GM18951 (cell line): ENCODE measurements at regions of chr12 and their contacts with region 1.

Region 1: DNA sequence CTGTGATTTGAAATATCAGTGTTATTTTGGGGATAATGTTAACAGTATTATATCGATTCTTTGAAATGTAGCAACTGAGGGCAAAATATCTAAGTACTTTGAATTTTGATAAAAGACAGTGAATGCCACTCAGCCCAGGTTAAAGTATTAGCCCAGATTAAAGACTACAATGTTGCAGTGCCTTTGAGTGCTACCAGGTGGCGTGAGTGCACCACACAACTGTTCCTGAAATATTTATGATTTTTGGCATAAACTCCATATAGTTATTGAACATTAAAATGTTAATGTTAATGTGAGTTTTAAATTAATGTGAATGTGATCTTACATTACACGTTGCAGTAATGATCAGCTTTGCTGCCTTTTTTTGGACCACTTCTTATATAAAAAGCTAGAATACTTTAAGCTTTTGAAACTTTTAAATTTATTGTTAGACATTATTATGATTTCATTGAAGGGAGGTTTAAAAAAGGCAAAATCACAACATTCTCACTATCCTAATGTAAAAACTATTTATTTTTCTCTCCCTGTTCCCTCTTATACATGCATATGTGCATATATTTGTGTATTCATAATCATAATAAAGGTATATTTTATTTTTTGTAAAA is 22.5 kb downstream of the MRPS35 start:
- POLR2A ChIP-seq: no peak

Region 2: DNA sequence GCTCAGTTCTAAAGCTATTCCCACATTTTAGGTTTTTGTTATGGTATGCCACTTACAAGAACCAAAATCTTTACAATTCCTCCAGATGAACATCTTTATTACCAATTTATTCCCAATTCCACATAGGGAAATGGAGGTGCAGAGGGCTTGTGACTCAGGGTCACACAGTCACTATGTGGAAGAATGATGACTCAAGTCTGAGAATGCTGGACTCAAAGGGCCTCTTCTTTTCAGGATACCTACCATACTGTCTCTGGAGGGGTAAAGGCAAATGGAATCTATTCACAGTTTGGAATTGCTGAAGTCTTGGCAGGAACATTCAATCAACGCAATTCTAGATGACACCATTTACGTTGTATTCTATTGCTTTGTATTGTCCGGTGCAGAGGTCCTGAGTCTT is 95.0 kb after region 1 on chr12:
- in situ Hi-C with region 1: no loop called
- POLR2A ChIP-seq: no peak

Region 3: DNA sequence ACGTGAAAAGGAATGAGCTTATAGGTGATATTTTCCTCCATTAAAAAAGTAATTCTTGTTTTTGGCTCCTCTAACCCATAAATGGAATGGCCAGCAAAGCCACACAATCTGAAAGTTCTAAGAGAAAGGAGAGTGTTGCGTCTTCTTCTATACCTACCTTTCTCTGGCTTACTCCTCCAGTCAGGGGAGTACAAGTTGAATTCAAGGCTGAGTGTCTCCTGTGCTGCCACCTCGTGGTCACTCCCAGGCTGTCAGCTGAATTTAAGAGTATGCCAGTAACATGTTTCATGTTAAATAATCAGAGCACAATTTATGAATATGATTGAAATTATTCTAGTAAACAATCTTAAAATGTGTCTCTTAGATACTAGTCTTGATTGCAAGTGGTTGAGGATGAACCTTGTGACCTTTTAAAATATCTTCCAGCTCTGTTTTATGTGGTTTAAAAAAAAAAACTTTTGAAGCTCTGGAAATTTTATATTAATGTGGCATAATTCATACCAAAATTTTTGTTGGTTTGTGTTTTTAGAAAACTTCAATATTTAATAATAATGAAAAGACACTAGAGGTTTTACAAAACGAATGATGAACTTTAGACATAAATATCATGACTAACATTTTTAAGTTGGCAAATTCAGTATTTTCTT is 207.7 kb after region 1 on chr12:
- in situ Hi-C with region 1: loop called (anchors 10 kb)
- POLR2A ChIP-seq: no peak